ENCODE measurements at regions of chr1 and their contacts with region 1.

Region 1: GRCh38 chr1:114346480-114347029 is 164.4 kb downstream of the TRIM33 start:
- DNase-seq: peak; percentile 33
- H3K4me3 ChIP-seq: peak overlapping the region; percentile 42
- CTCF ChIP-seq: peak; percentile 100

Region 2: GRCh38 chr1:113978863-113979702 is 367.5 kb before region 1 on chr1 and contains the start of gene OLFML3:
- CTCF ChIA-PET with region 1: interaction called, 103 read pairs
- POLR2A ChIA-PET with region 1: no interaction called
- DNase-seq: peak; percentile 77
- H3K4me3 ChIP-seq: peak within 1 kb of the TSS; percentile 66
- CTCF ChIP-seq: peak; percentile 61

Region 3: DNA sequence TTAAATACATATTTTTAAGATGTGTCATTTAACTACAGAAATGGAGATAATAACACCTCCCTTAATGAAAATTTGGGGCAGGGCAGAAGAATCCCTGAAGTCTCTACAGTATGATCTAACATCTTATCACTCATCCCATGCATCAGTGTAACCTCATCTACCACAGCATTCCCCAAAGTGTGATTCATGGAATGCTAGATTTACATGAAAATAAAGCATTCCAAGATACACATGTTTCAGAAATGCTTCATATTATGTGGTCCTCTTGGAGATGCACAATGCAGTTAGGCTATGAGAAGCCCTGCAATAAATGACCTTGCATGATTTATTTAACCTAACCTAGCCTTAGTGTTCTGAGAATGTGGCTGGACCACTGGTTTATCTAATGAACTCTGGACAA is 26.0 kb before region 1 on chr1:
- CTCF ChIA-PET with region 1: interaction called, 56 read pairs
- POLR2A ChIA-PET with region 1: no interaction called
- DNase-seq: peak; percentile 63
- H3K4me3 ChIP-seq: no peak overlapping the region
- CTCF ChIP-seq: no peak

Region 4: GRCh38 chr1:114336360-114336759 is 10.2 kb before region 1 on chr1:
- CTCF ChIA-PET with region 1: interaction called, 46 read pairs
- POLR2A ChIA-PET with region 1: no interaction called
- DNase-seq: no peak
- H3K4me3 ChIP-seq: no peak overlapping the region
- CTCF ChIP-seq: no peak

Region 5: DNA sequence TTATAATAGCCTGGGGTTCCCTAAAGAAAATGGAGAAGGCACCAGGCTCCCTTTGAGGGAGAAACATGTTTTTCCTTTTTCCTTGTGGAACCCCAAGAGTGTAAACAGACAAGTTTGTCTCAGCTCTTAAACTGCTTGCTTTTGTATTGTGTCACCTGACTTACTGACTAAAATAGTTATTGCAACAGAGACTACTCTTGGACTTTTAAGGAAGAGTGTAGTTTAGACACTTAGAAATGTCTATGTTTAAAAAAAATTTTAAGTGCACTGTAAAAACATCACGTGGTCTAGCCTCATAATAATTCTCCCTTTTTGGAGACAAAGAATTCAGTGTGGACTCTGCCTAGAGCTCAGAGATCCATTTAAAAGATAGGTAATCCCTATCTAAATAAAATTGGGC is 23.4 kb after region 1 on chr1:
- CTCF ChIA-PET with region 1: interaction called, 10 read pairs
- POLR2A ChIA-PET with region 1: no interaction called
- DNase-seq: no peak
- H3K4me3 ChIP-seq: no peak overlapping the region
- CTCF ChIP-seq: no peak

Region 6: DNA sequence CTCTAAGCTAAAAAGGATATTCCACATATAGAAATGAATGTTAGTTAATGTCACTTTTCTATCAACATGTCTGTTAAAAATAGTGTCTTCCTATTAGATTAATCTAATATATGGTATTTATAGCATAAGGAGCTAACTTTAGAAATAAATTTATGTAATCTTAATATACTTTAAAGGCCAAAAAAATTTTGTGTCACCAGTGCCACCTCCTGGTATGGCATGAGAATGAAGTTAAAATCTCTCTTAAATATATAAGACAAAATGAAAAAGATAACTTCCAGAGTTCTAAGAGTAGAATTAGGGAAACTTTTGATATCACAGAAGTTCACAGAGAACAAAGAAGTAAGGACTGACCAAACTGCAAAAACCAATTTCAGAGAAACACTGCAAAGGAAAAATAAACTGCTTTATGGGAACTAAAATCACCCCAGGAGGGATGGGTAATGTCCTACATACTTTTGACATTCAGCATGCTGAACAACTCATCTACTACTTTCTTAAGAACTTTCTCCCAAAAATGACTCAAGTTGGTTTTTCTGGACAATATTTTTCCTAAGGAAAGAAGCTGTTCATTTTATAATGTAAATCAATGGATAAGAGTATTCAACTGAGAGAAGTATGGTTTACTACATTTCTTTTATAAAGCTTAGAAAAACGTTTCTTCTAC is 81.7 kb after region 1 on chr1:
- CTCF ChIA-PET with region 1: interaction called, 33 read pairs
- POLR2A ChIA-PET with region 1: no interaction called
- DNase-seq: no peak
- H3K4me3 ChIP-seq: no peak overlapping the region
- CTCF ChIP-seq: peak; percentile 12

Region 7: DNA sequence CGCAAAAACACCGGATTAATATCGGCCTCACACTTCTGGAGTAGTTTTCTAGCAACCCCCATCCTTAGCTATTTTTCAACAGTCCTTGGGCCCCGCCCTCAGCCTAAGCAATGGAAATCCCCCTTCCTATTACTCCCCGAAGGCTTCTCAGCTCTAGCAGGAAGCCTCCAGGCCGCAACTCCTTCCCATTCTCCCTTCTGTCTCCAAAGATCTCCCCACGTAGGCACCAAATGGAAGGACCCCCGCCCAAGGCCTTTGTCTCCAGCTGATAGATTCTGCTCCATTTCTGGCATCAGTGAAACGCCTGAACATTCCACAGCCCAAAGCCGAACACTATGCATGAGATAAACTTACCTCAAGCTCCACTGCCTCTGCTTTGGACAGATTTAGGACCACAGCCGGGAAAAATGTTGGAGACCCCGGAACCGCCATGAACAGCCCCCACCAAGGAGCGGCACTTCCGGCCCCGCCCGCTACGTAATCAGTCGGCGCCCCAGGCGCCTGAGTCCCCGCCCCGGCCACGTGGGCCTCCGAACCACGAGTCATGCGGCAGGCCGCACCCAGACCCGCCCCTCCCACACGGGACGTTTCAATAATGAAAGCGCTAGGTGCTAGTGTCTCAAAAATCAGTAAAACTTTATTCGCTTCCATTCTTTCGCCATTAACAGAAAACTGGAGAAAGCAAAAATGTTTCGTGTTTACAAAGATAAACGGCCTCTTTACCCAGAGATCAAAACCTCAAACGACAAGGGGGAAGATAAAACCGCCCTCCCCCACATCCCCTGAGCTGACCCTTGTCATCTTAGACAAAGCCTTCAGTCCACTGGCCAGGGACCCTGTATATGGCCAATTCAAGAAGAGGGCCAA is 370.0 kb after region 1 on chr1 and contains the start of gene NRAS:
- CTCF ChIA-PET with region 1: interaction called, 10 read pairs
- POLR2A ChIA-PET with region 1: no interaction called
- DNase-seq: peak; percentile 51
- H3K4me3 ChIP-seq: peak within 1 kb of the TSS; percentile 93
- CTCF ChIP-seq: no peak

Measured in AG04449 (cell line).